ENCODE measurements at regions of chr6 and their contacts with region 1.

Region 1: GRCh38 chr6:19368509-19368908 is 468.7 kb upstream of the ID4 start:
- DNase-seq: no peak
- H3K4me3 ChIP-seq: no peak overlapping the region
- H3K27ac ChIP-seq: no peak overlapping the region
- H3K4me1 ChIP-seq: no peaks in the 10 kb centered on the region
- H3K27me3 ChIP-seq: no peaks in the 10 kb centered on the region
- CTCF ChIP-seq: no peak

Region 2: DNA sequence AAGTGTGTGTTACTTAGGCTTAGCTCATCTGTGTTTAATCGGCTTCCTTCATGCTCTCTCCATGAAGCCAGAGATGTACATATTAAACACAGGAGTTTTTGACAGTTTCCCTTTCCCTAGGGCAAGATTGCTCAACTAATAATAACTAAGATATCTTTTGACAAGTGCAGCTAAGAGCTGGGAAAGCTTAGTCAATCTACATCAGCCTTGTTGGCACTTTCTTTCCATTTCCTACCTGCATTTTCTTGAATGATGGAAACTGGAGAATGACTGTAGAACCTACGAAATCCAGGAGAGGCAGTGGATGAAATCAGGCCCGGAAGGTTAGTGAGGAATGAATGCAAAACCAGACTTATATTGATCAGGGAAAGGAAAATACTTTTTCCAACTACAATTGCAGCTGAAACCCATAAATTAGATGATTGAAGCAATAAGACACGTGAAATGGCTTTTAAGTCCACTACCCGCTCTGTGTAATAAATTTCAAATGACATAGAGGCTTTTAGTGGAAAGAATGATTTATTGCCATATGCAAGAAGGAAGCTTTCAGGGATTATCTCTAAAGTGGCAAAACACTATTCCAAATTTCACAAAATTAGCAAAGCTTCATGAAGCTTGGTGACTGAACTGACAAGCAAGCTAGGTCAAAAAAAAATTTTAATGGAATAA is 231.4 kb after region 1 on chr6:
- intact Hi-C with region 1: loop called (anchors 10 kb)
- DNase-seq: no peak
- H3K4me3 ChIP-seq: no peak overlapping the region
- H3K27ac ChIP-seq: no peak overlapping the region
- H3K4me1 ChIP-seq: no peaks in the 10 kb centered on the region
- H3K27me3 ChIP-seq: no peaks in the 10 kb centered on the region
- CTCF ChIP-seq: no peak